Cardiac septum (tissue), 1 donor: ENCODE measurements at regions of chr4 and their contacts with region 1.

Region 1: GRCh38 chr4:90293320-90293719 is 166.1 kb downstream of the CCSER1 start:
- DNase-seq: no peak

Region 2: GRCh38 chr4:89820010-89820409 is 473.3 kb before region 1 on chr4:
- intact Hi-C with region 1: no loop called
- DNase-seq: no peak

Region 3: DNA sequence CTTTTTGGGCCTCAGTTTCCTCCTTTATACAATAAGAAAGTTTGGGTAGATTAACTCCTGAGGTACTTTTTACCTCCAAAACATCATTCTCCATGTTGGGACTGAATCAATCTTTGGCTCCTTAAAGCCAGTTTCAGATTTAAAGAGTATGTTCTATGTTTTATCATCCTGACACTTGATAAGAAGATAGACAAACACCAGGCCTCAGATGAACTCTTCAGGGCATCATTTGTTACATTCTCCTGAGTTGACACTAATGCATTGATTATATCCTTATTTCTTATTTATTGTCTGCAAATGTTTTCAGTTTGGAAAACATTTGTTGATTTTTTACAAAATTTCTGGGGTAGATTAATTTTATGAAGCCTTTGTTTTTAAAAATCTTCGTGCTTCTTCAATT is 268.8 kb before region 1 on chr4:
- intact Hi-C with region 1: loop called (anchors 5 kb)
- DNase-seq: no peak

Region 4: DNA sequence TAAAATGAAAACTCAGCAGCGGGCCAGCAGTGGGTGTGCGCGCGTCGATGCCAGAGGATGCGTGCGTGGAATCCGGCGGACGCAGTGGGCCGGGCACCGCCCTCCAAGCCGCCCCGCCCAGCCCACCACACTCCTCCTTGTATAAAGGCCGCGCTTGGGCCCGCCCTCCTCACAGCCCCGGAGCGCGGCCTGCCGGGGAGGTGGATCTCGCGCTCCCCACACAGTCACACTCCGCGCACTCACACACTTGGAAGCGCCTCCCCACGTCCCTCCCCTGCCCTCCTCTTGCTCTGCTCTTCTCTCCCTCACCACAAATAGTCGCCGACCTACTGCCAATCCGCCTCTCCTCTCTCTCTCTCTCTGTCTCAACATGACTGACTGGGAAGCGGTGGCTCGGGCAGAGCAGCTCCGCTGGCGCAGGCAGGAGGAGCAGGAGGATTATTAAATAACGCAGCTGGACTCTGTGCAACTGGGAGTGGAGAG is 166.1 kb before region 1 on chr4 and contains the start of gene CCSER1:
- intact Hi-C with region 1: loop called (anchors 2 kb)
- DNase-seq: peak; percentile 83
- total RNA-seq, gene CCSER1: 15.7 TPM